Tibial artery (tissue), 4 donors: ENCODE measurements at regions of chrX and their contacts with region 1.

Region 1: DNA sequence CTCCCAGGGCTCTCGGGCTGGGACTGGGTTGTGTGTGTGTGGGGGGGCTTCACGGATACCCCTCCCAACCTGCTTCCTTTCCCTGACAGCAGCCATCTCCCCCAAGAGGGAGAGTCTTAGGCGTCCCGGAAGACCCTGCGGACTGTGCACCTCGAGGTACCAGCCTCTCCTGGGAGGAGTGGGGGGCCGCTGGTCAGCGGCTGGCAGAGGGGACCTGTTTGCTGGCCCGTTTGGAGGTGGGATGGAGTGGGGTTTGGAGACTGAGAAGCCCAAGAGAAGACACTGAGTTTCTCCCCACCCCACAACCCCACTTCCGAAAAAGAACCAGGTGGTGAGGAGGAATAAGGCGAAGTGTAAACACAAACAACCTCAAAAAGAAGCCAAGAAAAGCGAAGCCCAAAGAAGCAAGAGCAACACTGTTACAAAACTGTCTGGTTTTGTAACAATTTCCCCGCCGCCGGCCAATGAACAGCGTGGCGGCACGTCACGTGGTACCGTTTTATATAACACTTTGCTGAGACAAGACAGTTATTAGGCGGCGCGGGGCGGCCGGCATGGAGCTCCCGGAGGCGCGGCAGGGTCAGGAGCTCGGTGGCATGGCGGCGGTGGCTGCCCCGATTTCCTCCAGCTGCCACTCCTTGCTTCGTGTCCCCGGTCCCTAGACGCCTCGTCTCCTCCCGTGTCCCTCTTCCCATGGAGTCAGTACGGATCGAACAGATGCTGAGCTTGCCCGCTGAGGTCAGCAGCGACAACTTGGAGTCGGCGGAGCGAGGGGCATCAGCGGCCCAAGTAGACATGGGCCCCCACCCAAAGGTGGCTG is at the start of gene LONRF3:
- DNase-seq: peak; percentile 86 to 89
- H3K4me3 ChIP-seq: peak within 1 kb of the TSS; percentile 71 to 76
- H3K27ac ChIP-seq: peak within 1 kb of the TSS; percentile 78 to 92
- H3K4me1 ChIP-seq: peaks cover 0 to 11% (median 4%) of the 10 kb centered on the region in 4 donors
- H3K27me3 ChIP-seq: no peaks in the 10 kb centered on the region
- CTCF ChIP-seq: no peak

Region 2: GRCh38 chrX:118853596-118853995 is 120.7 kb before region 1 on chrX:
- intact Hi-C with region 1: loop called (anchors 10 kb)
- DNase-seq: no peak
- H3K4me3 ChIP-seq: no peak overlapping the region
- H3K27ac ChIP-seq: no peak overlapping the region
- H3K4me1 ChIP-seq: peaks cover 0 to 3% (median 0%) of the 10 kb centered on the region in 4 donors
- H3K27me3 ChIP-seq: no peaks in the 10 kb centered on the region
- CTCF ChIP-seq: no peak

Region 3: GRCh38 chrX:119028733-119029330 is 54.5 kb after region 1 on chrX:
- intact Hi-C with region 1: no loop called
- DNase-seq: no peak
- H3K4me3 ChIP-seq: no peak overlapping the region
- H3K27ac ChIP-seq: no peak overlapping the region
- H3K4me1 ChIP-seq: no peaks in the 10 kb centered on the region
- H3K27me3 ChIP-seq: no peaks in the 10 kb centered on the region
- CTCF ChIP-seq: no peak

Region 4: DNA sequence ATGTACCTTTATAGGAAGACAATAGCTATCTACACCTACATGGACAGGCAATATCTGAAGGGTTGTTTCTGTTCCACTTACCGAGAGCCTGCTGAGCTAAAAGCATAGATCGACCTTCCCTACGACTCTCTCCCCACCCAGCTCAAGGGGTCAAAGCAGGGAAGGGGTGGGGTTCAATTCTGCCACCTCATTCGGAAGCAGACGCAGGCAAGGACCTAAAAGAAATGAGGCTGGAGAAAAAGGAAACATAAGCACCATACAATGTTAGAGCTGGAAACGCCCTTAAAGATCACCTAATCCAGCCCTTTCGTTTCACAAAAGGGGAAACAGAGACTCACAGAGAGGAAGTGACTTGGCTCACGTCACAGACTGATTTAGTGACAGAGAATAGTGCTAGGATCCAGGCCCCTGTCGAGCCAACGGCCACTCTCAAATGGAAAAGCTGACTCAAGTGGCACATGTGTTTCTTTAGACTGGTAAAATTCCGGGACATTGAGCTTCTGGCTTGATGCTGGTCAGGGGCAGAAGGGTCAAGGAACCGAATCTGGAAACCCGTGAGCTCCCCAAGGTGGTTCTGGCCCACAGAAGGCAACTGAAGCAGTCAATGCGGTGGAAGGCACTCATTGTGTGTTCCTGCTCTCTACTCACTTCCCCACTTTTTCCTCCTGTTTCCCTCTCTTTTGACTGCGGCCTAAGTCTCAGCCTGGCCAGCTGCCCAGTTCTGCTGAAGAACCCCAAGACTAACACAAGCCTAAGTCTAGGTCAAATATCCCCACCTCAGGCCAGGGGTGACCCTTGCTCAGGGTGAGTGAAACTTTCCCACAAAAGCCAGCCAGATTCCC is 711.1 kb after region 1 on chrX:
- intact Hi-C with region 1: no loop called
- DNase-seq: peak in 1 of 2 donors; percentile 37
- H3K4me3 ChIP-seq: no peak overlapping the region
- H3K27ac ChIP-seq: peak overlapping the region; percentile 57 to 61
- H3K4me1 ChIP-seq: peaks cover 0 to 6% (median 2%) of the 10 kb centered on the region in 4 donors
- H3K27me3 ChIP-seq: no peaks in the 10 kb centered on the region
- CTCF ChIP-seq: no peak